Activated naive CD4-positive, alpha-beta T cell treated with anti-CD3 and anti-CD28 coated beads for 36 hours (primary cell): ENCODE measurements at regions of chr9 and their contacts with region 1.

Region 1: GRCh38 chr9:92325269-92325990 is at the starts of genes CENPP and NOL8:
- DNase-seq: peak; percentile 88
- H3K4me3 Mint-ChIP-seq: peak within 1 kb of the TSS; percentile 99
- H3K27ac Mint-ChIP-seq: peak within 1 kb of the TSS; percentile 97
- H3K4me1 Mint-ChIP-seq: peaks cover 41% of the 10 kb centered on the region
- H3K27me3 Mint-ChIP-seq: no peaks in the 10 kb centered on the region
- total RNA-seq, gene CENPP: 24.9 to 26.5 TPM
- total RNA-seq, gene NOL8: 41.0 to 46.2 TPM

Region 2: DNA sequence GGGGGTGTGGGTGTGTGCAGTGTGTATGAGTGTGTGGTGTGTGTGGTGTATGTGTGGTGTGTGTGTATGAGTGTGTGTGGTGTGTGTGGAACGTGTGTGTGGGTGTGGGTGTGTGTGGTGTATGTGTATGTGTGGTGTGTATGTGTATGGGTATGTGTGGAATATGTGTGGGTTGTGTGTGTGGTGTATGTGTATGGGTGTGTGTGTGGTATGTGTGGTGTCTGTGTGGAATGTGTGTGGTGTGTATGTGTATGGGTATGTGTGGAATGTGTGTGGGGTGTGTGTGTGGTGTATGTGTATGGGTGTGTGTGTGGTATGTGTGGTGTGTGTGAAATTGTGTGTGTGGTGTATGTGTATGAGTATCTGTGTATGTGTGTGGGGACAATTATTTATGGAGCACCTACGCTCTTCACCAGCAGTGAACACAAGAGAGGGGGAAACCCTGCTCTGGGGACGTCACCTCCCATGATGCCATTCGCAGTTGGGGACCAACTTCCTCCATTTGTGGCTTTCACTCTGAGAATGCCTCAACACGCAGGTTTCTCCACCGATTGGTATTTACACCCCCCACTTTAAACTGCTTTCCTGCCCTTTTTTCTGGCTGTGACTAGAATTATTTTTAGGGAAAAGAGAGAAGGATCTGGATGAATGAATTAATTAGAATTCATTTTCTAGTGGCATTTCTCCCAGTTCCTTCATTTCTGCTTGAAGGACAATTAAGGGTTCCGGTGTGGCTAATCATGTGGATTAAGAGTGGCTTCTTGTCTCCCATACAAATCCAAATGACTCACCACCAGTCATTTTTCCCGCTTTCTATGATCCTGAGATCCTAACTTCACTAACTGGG is 613.5 kb before region 1 on chr9:
- CTCF ChIA-PET with region 1: no interaction called
- intact Hi-C with region 1: loop called (anchors 2 kb)
- DNase-seq: peak; percentile 92
- H3K4me3 Mint-ChIP-seq: no peak overlapping the region
- H3K27ac Mint-ChIP-seq: no peak overlapping the region
- H3K4me1 Mint-ChIP-seq: no peaks in the 10 kb centered on the region
- H3K27me3 Mint-ChIP-seq: peaks cover 28% of the 10 kb centered on the region

Region 3: GRCh38 chr9:92293452-92294296 is 31.8 kb before region 1 on chr9 and contains the start of gene IARS1:
- CTCF ChIA-PET with region 1: interaction called, 3 read pairs
- intact Hi-C with region 1: loop called (anchors 1 kb)
- DNase-seq: peak; percentile 100
- H3K4me3 Mint-ChIP-seq: peak within 1 kb of the TSS; percentile 95
- H3K27ac Mint-ChIP-seq: peak within 1 kb of the TSS; percentile 97
- H3K4me1 Mint-ChIP-seq: peaks cover 49% of the 10 kb centered on the region
- H3K27me3 Mint-ChIP-seq: no peaks in the 10 kb centered on the region
- total RNA-seq, gene IARS1: 271 to 272 TPM

Region 4: DNA sequence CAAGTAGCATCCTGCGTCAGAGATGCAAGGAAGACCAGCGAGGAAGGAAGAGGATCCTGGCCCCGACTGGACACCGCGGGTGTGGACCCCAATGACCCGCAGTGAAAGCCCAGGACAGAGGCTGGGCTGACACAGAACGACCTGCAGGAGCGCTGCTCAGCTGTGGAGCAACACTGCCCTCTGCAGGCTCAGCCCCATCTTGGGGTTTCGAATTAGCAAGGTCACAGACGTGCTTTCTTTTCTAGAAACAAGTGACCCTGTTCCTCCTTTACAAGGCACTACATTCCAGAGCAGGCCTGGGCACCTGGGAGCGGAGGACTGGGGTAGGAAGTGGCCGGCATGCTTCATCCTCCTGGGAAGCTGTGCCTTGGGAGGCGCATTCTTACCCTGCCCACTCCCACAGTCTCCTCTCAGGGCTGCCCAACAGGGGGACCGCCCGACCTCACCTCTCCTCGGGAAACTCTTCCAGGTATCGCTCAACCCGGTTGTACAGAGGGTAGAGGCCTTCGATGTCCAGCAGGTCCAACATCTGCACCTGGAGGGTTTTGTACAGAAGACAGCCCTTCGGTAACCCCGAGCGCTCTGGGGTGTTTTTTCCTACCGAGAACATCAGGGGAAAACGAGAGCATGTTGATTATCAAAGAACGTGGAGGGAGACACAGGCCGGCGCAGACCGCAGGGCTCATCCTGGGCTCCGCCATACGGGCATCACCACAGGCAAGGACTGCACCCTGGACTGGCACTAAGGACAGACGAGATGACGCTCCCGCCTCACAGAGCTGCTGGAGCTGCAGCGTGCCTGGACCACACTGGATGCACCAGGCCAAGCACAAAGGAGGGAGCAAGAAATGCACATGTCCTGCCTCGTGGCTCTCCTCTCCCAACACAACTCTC is 309.5 kb after region 1 on chr9:
- CTCF ChIA-PET with region 1: no interaction called
- intact Hi-C with region 1: loop called (anchors 5 kb)
- DNase-seq: peak; percentile 78
- H3K4me3 Mint-ChIP-seq: no peak overlapping the region
- H3K27ac Mint-ChIP-seq: no peak overlapping the region
- H3K4me1 Mint-ChIP-seq: no peaks in the 10 kb centered on the region
- H3K27me3 Mint-ChIP-seq: no peaks in the 10 kb centered on the region

Region 5: GRCh38 chr9:92749071-92749933 is 423.9 kb after region 1 on chr9:
- CTCF ChIA-PET with region 1: no interaction called
- intact Hi-C with region 1: no loop called
- DNase-seq: no peak
- H3K4me3 Mint-ChIP-seq: no peak overlapping the region
- H3K27ac Mint-ChIP-seq: no peak overlapping the region
- H3K4me1 Mint-ChIP-seq: peaks cover 58% of the 10 kb centered on the region
- H3K27me3 Mint-ChIP-seq: no peaks in the 10 kb centered on the region